ENCODE measurements at regions of chr15 and their contacts with region 1.

Region 1: DNA sequence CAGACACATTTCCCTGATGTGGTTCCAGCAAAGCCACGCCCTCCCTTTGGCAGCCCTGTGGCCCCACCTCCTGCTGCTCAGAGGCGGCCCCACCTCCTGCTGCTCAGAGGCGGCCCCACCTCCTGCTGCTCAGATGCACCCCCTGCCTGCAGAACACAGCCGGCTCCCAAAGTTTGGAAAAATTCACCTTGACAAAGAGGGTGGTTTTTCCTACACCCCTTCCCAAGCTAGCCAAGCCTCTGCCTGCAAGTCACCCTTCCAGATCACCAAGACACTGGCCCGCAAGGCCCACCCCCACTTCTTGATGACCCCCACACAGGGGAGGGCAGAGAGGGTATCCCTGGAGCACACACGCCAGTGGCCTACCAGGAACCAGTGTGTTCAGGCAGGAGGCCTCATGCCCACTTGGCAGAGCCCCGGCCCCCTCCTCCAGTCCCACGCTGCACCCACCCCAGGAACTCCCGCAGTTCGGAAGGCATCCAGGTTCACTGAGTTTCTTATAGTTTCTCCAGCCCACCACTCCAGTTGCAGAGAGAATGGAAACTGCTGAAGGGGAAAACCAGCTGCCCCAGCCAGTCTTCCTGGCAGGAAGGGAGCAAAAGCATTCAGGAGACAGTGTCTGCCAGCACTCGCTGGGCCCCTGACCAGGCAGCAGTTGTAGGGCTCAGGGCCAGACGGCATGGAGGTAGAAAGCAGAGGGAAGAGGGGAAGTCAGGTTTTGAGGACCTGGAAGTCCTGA is 2.3 kb upstream of the HAPLN3 start:
- DNase-seq: peak; percentile 84
- H3K4me3 ChIP-seq: no peak overlapping the region
- H3K27ac ChIP-seq: peak overlapping the region; percentile 74
- H3K4me1 ChIP-seq: peaks cover 36% of the 10 kb centered on the region
- H3K27me3 ChIP-seq: no peaks in the 10 kb centered on the region
- CTCF ChIP-seq: peak; percentile 42 to 62
- POLR2A ChIP-seq: peak; percentile 10

Region 2: GRCh38 chr15:88467073-88467934 is 430.3 kb before region 1 on chr15 and contains the starts of genes MRPL46 and MRPS11:
- CTCF ChIA-PET with region 1: no interaction called
- POLR2A ChIA-PET with region 1: no interaction called
- dilution Hi-C with region 1: no loop called
- intact Hi-C with region 1: loop called (anchors 2 kb)
- DNase-seq: peak; percentile 92
- H3K4me3 ChIP-seq: peak within 1 kb of the TSS; percentile 76 to 99 (median 84)
- H3K27ac ChIP-seq: peak within 1 kb of the TSS; percentile 96
- H3K4me1 ChIP-seq: peaks cover 37% of the 10 kb centered on the region
- H3K27me3 ChIP-seq: no peaks in the 10 kb centered on the region
- CTCF ChIP-seq: no peak
- POLR2A ChIP-seq: peak; percentile 87
- total RNA-seq, gene MRPL46: 27.9 and 30.9 TPM in 2 replicates
- total RNA-seq, gene MRPS11: 66.3 and 71.7 TPM in 2 replicates

Region 3: GRCh38 chr15:88657326-88658069 is 240.1 kb before region 1 on chr15:
- CTCF ChIA-PET with region 1: interaction called, 6 read pairs
- POLR2A ChIA-PET with region 1: no interaction called
- dilution Hi-C with region 1: no loop called
- intact Hi-C with region 1: loop called (anchors 1 kb)
- DNase-seq: peak; percentile 43
- H3K4me3 ChIP-seq: no peak overlapping the region
- H3K27ac ChIP-seq: no peak overlapping the region
- H3K4me1 ChIP-seq: peaks cover 14% of the 10 kb centered on the region
- H3K27me3 ChIP-seq: no peaks in the 10 kb centered on the region
- CTCF ChIP-seq: peak; percentile 73 to 80
- POLR2A ChIP-seq: no peak

Region 4: DNA sequence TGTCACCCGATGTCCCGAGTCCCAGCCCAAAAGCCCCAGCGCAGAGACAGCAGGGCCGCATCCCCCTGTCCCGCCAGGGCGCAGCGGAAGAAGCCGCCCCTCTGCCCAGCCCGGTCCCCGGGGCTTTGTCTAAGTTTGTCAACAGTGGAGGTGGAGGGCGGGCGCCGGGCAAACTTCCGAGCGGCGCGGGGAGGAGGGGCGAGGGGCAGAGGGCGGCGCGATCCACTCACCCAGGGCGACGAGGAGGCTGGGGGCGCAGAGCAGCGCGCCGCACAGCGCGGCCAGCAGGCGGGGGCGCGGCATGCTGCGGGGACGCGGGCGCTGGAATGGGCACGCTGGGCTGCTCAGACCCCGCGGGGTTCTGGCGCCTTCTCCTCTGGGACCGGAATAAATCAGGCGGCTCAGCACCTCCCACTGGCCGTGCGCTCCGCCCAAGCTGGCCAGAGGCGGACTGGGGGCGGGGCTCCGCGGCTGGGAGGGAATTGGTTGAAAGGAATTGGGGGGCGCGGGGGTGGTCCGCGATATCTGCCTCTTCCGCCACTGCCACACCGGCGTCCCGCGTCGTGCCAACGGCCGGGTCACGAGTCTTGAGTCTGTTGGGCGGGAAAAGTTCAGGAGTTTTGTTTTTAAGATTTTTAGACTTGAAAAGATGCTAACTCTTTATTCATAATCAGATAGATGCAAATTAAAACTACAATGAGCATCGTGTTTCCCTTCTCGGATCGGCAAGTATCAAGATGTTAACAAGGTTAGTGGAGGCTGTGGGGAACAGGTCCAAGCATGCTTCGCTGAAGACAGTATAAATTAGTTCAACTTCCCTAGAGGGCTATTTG is 15.6 kb after region 1 on chr15 and contains the start of gene MFGE8:
- CTCF ChIA-PET with region 1: interaction called, 3 read pairs
- POLR2A ChIA-PET with region 1: interaction called, 3 read pairs
- dilution Hi-C with region 1: no loop called
- intact Hi-C with region 1: loop called (anchors 1 kb)
- DNase-seq: peak; percentile 70
- H3K4me3 ChIP-seq: peak within 1 kb of the TSS; percentile 60 to 77 (median 74)
- H3K27ac ChIP-seq: peak within 1 kb of the TSS; percentile 33
- H3K4me1 ChIP-seq: peaks cover 12% of the 10 kb centered on the region
- H3K27me3 ChIP-seq: no peaks in the 10 kb centered on the region
- CTCF ChIP-seq: peak in 1 of 2 donors; percentile 0
- POLR2A ChIP-seq: peak; percentile 70
- total RNA-seq, gene MFGE8: 108 and 111 TPM in 2 replicates

Region 5: DNA sequence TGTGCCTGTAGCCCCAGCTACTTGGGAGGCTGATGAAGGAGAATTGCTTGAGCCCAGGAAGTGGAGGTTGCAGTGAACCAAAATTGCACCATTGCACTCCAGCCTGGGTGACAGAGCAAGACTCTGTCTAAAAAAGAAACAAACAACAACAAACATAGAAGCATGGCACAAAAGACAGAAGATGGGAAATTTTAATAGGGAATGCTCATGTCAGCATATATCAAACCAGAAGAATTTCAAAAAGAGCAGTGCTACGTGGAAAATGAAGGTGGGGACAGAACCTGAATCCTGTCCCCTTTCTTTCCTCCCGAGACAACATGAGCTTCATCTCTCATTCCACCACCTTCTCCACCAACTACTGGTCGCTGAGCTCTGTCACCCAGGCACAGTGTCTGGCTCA is 61.8 kb after region 1 on chr15:
- CTCF ChIA-PET with region 1: no interaction called
- POLR2A ChIA-PET with region 1: no interaction called
- dilution Hi-C with region 1: no loop called
- intact Hi-C with region 1: no loop called
- DNase-seq: no peak
- H3K4me3 ChIP-seq: no peak overlapping the region
- H3K27ac ChIP-seq: no peak overlapping the region
- H3K4me1 ChIP-seq: no peaks in the 10 kb centered on the region
- H3K27me3 ChIP-seq: no peaks in the 10 kb centered on the region
- CTCF ChIP-seq: no peak
- POLR2A ChIP-seq: no peak

Region 6: GRCh38 chr15:89112341-89112971 is 214.8 kb after region 1 on chr15:
- CTCF ChIA-PET with region 1: no interaction called
- POLR2A ChIA-PET with region 1: interaction called, 11 read pairs
- dilution Hi-C with region 1: no loop called
- intact Hi-C with region 1: no loop called
- DNase-seq: peak; percentile 73
- H3K4me3 ChIP-seq: no peak overlapping the region
- H3K27ac ChIP-seq: peak overlapping the region; percentile 62
- H3K4me1 ChIP-seq: peaks cover 16% of the 10 kb centered on the region
- H3K27me3 ChIP-seq: no peaks in the 10 kb centered on the region
- CTCF ChIP-seq: no peak
- POLR2A ChIP-seq: no peak

Measured in endothelial cell of umbilical vein (primary cell).